A673 (cell line): ENCODE measurements at regions of chr20 and their contacts with region 1.

Region 1: GRCh38 chr20:34312544-34313217 is 9.5 kb upstream of the AHCY start:
- DNase-seq: peak; percentile 93
- H3K4me3 ChIP-seq: peak overlapping the region; percentile 31
- H3K27ac ChIP-seq: no peak overlapping the region
- H3K4me1 ChIP-seq: peaks cover 12% of the 10 kb centered on the region
- H3K27me3 ChIP-seq: no peaks in the 10 kb centered on the region
- CTCF ChIP-seq: peak; percentile 100

Region 2: DNA sequence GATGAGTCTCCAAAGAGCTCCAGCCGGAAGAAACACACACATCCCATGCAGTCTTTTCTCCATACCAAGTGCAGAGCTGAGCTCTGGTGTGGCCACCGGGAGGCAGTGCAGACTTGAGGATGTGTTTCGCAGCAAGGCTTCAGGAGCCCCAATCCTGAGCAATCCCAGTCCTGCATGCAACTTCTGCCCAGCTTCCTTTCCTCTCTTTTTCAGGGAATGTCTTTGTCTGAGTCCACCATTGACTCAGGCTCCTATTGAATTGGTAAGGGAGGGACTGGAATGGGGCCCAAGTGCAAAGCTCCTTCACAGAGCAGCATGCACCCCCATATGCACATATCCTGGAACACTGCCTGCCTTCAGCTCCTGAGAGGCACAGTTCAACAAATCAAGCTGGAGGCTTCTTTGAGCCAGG is 122.0 kb before region 1 on chr20:
- CTCF ChIA-PET with region 1: interaction called, 24 read pairs
- POLR2A ChIA-PET with region 1: no interaction called
- intact Hi-C with region 1: no loop called
- DNase-seq: peak; percentile 88
- H3K4me3 ChIP-seq: no peak overlapping the region
- H3K27ac ChIP-seq: no peak overlapping the region
- H3K4me1 ChIP-seq: peaks cover 19% of the 10 kb centered on the region
- H3K27me3 ChIP-seq: no peaks in the 10 kb centered on the region
- CTCF ChIP-seq: peak; percentile 95

Region 3: DNA sequence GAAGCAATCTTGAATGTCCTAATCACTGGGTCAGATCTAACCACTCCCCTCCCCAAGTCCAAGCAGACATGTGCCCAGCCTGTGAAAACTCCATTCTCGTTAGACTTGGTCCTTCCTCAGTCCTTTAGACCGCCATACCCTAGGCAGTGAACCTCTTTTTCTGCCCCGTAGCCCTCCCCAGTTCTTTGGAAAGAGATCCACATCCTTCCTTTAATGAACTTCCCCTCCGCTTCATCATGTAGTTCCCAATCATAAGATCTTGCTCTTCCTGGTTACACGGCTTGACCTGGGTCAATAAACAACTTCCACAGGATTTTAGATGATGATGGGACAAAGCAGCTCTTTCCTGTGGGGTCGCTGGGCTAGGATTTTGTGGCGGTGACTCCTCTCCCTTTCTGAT is 19.1 kb before region 1 on chr20:
- CTCF ChIA-PET with region 1: no interaction called
- POLR2A ChIA-PET with region 1: no interaction called
- intact Hi-C with region 1: no loop called
- DNase-seq: no peak
- H3K4me3 ChIP-seq: no peak overlapping the region
- H3K27ac ChIP-seq: no peak overlapping the region
- H3K4me1 ChIP-seq: no peaks in the 10 kb centered on the region
- H3K27me3 ChIP-seq: no peaks in the 10 kb centered on the region
- CTCF ChIP-seq: no peak

Region 4: DNA sequence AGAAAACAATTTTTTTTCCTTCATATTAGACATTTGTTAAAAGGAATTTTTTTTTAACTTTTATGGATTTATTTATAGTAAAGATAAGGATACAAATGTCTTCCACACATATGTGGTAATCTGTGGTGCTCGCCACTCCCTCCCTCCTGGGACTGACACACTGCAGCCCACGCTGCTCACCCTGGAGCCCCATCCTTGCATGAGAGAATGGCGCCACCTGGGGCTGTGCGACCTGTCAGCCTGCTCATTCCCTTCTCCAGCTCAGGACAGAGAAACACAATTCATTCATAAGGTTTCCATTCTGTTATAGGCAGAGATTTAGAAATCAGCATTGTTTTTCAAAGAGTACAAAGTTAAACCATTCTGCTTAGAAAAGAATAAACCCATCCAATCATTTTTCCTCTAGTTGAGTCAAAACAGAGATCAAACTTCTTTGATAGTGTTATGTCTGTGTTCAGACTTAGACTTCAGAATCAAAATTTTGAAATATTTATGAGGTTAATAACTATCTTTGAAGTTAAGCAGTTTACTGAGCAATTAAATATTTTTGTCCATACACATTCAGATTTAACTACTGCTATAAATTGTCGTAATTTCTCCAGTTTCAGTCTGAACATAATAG is 160.7 kb after region 1 on chr20:
- CTCF ChIA-PET with region 1: interaction called, 8 read pairs
- POLR2A ChIA-PET with region 1: no interaction called
- intact Hi-C with region 1: loop called (anchors 5 kb)
- DNase-seq: peak; percentile 64
- H3K4me3 ChIP-seq: no peak overlapping the region
- H3K27ac ChIP-seq: no peak overlapping the region
- H3K4me1 ChIP-seq: no peaks in the 10 kb centered on the region
- H3K27me3 ChIP-seq: no peaks in the 10 kb centered on the region
- CTCF ChIP-seq: peak; percentile 55

Region 5: GRCh38 chr20:34516247-34517113 is 203.8 kb after region 1 on chr20 and contains the start of gene DYNLRB1:
- CTCF ChIA-PET with region 1: interaction called, 34 read pairs
- POLR2A ChIA-PET with region 1: no interaction called
- intact Hi-C with region 1: no loop called
- DNase-seq: peak; percentile 97
- H3K4me3 ChIP-seq: peak within 1 kb of the TSS; percentile 91
- H3K27ac ChIP-seq: peak within 1 kb of the TSS; percentile 87
- H3K4me1 ChIP-seq: peaks cover 3% of the 10 kb centered on the region
- H3K27me3 ChIP-seq: no peaks in the 10 kb centered on the region
- CTCF ChIP-seq: no peak
- total RNA-seq, gene DYNLRB1: 142 and 144 TPM in 2 replicates

Region 6: DNA sequence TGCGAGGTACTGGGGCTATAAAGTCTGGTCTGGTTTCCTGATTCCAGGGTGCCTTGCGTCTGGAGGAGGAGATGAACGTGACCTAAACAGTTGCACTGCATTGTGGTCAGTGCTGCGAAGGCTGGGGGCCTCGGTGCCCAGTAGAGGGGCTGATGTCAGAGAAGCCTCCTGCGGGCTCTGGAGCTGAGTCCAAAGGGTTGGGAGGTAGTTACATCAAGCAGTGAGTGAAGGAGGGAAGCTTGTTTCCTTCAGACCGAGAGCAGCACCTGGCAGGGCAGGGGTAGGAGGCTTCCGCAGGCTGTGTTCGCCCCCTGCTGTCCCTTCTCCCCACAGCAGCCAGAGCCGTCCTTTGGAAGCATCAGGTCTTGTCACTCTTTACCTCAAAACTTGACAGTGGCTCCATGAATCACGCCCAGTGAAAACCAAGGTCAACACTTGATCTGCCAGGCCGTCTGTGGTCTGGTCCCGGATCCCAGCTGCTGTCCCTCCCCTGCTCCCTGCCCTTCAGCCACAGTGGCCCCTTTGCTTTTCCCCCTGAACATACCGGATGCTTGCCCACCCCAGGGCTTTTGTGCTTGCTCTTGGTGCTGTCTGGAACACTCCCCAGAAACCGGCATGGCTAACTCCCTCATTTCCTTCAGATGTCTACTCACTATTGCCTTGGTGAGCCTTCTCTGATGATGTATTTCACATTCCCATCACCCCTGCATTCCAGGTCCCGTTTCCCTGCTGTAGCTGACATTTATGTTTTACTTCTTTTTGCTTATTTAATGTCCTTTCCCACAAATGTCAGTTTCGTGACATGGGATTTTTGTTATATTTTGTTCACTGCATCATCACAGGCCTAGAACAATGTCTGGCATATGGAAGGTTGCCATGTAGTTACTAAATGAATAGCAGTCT is 210.5 kb after region 1 on chr20:
- CTCF ChIA-PET with region 1: interaction called, 34 read pairs
- POLR2A ChIA-PET with region 1: no interaction called
- intact Hi-C with region 1: loop called (anchors 2 kb)
- DNase-seq: peak; percentile 61
- H3K4me3 ChIP-seq: no peak overlapping the region
- H3K27ac ChIP-seq: no peak overlapping the region
- H3K4me1 ChIP-seq: no peaks in the 10 kb centered on the region
- H3K27me3 ChIP-seq: no peaks in the 10 kb centered on the region
- CTCF ChIP-seq: peak; percentile 63

Region 7: DNA sequence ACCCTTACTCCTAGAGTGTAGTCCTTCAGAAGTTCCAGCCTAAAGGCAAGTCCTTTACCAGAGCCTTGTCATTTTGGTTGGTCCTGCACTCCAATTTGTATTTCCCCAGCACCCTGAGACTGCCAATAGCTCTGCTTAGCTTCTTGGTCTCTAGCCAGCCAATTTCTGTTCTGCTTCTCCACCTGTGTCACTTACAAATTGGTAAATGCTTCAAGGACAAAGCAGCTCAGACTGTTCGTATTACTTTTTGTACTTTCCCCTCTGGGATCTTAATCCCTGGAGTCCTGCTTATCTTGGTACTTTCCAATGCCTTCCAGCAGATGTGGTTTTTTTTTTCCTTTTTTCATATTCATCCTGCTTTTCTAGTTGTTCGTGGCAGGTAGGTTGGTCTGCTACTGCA is 338.5 kb after region 1 on chr20:
- CTCF ChIA-PET with region 1: no interaction called
- POLR2A ChIA-PET with region 1: no interaction called
- intact Hi-C with region 1: no loop called
- DNase-seq: no peak
- H3K4me3 ChIP-seq: no peak overlapping the region
- H3K27ac ChIP-seq: no peak overlapping the region
- H3K4me1 ChIP-seq: no peaks in the 10 kb centered on the region
- H3K27me3 ChIP-seq: no peaks in the 10 kb centered on the region
- CTCF ChIP-seq: no peak

Region 8: DNA sequence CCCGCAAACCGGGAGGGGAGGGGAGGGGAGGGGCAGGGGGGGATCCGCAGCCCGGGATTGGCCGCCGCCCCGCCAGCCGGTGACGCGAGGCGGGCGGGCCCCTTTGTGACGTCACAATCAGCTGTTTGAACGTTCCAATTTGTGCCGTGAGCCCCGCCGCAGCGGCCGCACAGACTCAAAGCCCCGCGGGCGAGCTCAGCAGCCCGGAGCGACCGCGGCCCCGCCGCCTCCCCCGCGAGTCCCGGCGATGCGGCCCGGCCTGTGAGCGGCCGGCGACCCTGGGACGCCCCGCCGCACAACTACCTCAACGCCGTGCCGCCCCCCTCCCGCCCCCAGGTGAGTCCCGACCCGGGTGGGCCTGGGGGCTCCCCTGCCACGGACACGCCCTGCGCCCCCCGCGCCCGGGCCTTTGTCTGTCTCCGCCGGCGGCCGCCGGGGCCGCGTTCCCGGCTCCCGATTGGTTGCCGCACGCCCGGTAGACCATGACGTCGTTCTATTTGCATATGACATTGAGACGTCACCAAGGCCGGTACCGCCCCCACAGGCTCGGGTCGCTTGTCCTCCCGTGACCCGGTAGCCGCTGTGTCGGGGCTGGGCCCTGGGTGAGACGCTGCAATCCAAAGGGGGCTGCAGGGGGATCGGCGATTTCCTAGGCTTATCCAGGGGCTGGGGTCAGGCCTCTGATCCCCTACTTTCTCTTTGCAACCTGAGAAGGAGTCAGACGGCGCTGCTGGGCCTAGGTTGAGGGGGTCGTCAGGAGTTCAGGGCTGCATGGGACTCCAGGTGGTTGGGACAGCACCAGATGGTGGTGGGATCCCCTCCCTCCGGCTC is 391.7 kb after region 1 on chr20 and contains the start of gene TP53INP2:
- CTCF ChIA-PET with region 1: interaction called, 15 read pairs
- POLR2A ChIA-PET with region 1: no interaction called
- intact Hi-C with region 1: loop called (anchors 5 kb)
- DNase-seq: peak; percentile 90
- H3K4me3 ChIP-seq: peak within 1 kb of the TSS; percentile 81
- H3K27ac ChIP-seq: peak within 1 kb of the TSS; percentile 99
- H3K4me1 ChIP-seq: peaks cover 12% of the 10 kb centered on the region
- H3K27me3 ChIP-seq: no peaks in the 10 kb centered on the region
- CTCF ChIP-seq: no peak
- total RNA-seq, gene TP53INP2: 7.2 and 8.4 TPM in 2 replicates

Region 9: GRCh38 chr20:34768096-34768495 is 455.4 kb after region 1 on chr20:
- CTCF ChIA-PET with region 1: interaction called, 21 read pairs
- POLR2A ChIA-PET with region 1: no interaction called
- intact Hi-C with region 1: loop called (anchors 5 kb)
- DNase-seq: no peak
- H3K4me3 ChIP-seq: no peak overlapping the region
- H3K27ac ChIP-seq: no peak overlapping the region
- H3K4me1 ChIP-seq: no peaks in the 10 kb centered on the region
- H3K27me3 ChIP-seq: no peaks in the 10 kb centered on the region
- CTCF ChIP-seq: no peak